PC-3 (cell line): ENCODE measurements at regions of chr2 and their contacts with region 1.

Region 1: GRCh38 chr2:215529271-215529670 is 93.4 kb upstream of the FN1 start:
- DNase-seq: peak; percentile 97
- ATAC-seq: peak; percentile 82
- H3K4me3 ChIP-seq: peak overlapping the region; percentile 37
- H3K27ac ChIP-seq: peak overlapping the region; percentile 99
- H3K4me1 ChIP-seq: peaks cover 42% of the 10 kb centered on the region
- H3K27me3 ChIP-seq: no peaks in the 10 kb centered on the region
- CTCF ChIP-seq: no peak

Region 2: GRCh38 chr2:215410932-215411285 is 118.4 kb before region 1 on chr2:
- CTCF ChIA-PET with region 1: no interaction called
- POLR2A ChIA-PET with region 1: no interaction called
- intact Hi-C with region 1: loop called (anchors 1 kb)
- DNase-seq: peak; percentile 97
- ATAC-seq: peak; percentile 81
- H3K4me3 ChIP-seq: peak overlapping the region; percentile 28; the same call in 1 of the 2 replicates
- H3K27ac ChIP-seq: peak overlapping the region; percentile 89
- H3K4me1 ChIP-seq: peaks cover 39% of the 10 kb centered on the region
- H3K27me3 ChIP-seq: no peaks in the 10 kb centered on the region
- CTCF ChIP-seq: no peak

Region 3: GRCh38 chr2:215435809-215436704 is 93.2 kb before region 1 on chr2 and contains the start of gene FN1:
- CTCF ChIA-PET with region 1: no interaction called
- POLR2A ChIA-PET with region 1: no interaction called
- intact Hi-C with region 1: loop called (anchors 1 kb)
- DNase-seq: peak; percentile 82
- ATAC-seq: peak; percentile 59
- H3K4me3 ChIP-seq: peak within 1 kb of the TSS; percentile 97
- H3K27ac ChIP-seq: peak within 1 kb of the TSS; percentile 82
- H3K4me1 ChIP-seq: peaks cover 38% of the 10 kb centered on the region
- H3K27me3 ChIP-seq: no peaks in the 10 kb centered on the region
- CTCF ChIP-seq: no peak
- total RNA-seq, gene FN1: 220 and 248 TPM in 2 replicates

Region 4: DNA sequence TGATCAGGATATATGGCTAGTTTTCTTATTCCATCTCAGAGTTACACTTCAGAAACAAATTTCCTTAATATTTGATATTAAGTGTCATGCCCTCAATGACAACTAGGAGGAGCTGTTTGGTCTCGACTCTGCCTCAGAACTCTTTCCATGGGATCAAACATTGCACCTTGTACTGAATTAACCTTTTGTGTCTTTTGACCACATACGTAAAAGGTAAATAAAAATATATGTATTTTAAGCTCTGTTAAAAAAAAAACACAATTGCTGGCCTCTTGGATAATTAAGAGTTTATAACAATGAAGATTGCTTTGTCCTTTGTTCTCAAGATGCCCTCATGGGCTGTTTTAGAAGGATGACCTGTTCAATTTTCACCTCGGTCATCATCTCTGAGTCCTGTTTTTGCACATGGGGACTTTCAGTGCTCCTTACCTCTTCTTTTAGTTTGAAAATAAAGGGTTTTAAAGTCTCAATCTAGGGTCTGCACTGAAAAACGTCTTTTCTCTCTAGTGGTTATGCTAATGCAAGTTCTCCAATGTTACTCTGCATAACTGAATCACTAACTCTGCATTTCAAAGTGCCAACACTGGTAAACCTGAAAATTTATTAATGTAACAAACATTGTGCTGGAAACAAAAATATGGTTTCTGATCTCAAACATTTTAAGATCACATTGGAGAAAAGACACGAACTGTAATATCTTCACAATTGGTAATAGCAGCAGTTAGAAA is 74.6 kb before region 1 on chr2:
- CTCF ChIA-PET with region 1: no interaction called
- POLR2A ChIA-PET with region 1: no interaction called
- intact Hi-C with region 1: loop called (anchors 2 kb)
- DNase-seq: peak; percentile 70
- ATAC-seq: peak; percentile 37
- H3K4me3 ChIP-seq: no peak overlapping the region
- H3K27ac ChIP-seq: no peak overlapping the region
- H3K4me1 ChIP-seq: 0 out of 2 replicates have a peak, but pooled peaks cover 7% of the 10 kb centered on the region
- H3K27me3 ChIP-seq: no peaks in the 10 kb centered on the region
- CTCF ChIP-seq: peak; percentile 88

Region 5: GRCh38 chr2:215573496-215573895 is 44.2 kb after region 1 on chr2:
- CTCF ChIA-PET with region 1: interaction called, 3 read pairs
- POLR2A ChIA-PET with region 1: no interaction called
- intact Hi-C with region 1: loop called (anchors 1 kb)
- DNase-seq: no peak
- ATAC-seq: no peak
- H3K4me3 ChIP-seq: no peak overlapping the region
- H3K27ac ChIP-seq: no peak overlapping the region
- H3K4me1 ChIP-seq: peaks cover 10% of the 10 kb centered on the region; the same call in 1 of the 2 replicates
- H3K27me3 ChIP-seq: no peaks in the 10 kb centered on the region
- CTCF ChIP-seq: no peak

Region 6: GRCh38 chr2:215728504-215729087 is 199.3 kb after region 1 on chr2:
- CTCF ChIA-PET with region 1: no interaction called
- POLR2A ChIA-PET with region 1: no interaction called
- intact Hi-C with region 1: loop called (anchors 1 kb)
- DNase-seq: peak; percentile 91
- ATAC-seq: peak; percentile 91
- H3K4me3 ChIP-seq: no peak overlapping the region
- H3K27ac ChIP-seq: peak overlapping the region; percentile 95
- H3K4me1 ChIP-seq: peaks cover 32% of the 10 kb centered on the region
- H3K27me3 ChIP-seq: no peaks in the 10 kb centered on the region
- CTCF ChIP-seq: no peak